Calu3 (cell line): ENCODE measurements at regions of chr4 and their contacts with region 1.

Region 1: GRCh38 chr4:140326395-140326993 is 47.0 kb upstream of the SCOC start:
- DNase-seq: peak; percentile 14
- H3K4me3 Mint-ChIP-seq: no peak overlapping the region
- H3K27ac Mint-ChIP-seq: no peak overlapping the region
- H3K4me1 Mint-ChIP-seq: peaks cover 5% of the 10 kb centered on the region
- H3K27me3 Mint-ChIP-seq: no peaks in the 10 kb centered on the region
- CTCF ChIP-seq: peak; percentile 32

Region 2: GRCh38 chr4:139734875-139735380 is 591.6 kb before region 1 on chr4:
- CTCF ChIA-PET with region 1: interaction called, 5 read pairs
- intact Hi-C with region 1: loop called (anchors 10 kb)
- DNase-seq: peak; percentile 61
- H3K4me3 Mint-ChIP-seq: peak overlapping the region; percentile 59
- H3K27ac Mint-ChIP-seq: no peak overlapping the region
- H3K4me1 Mint-ChIP-seq: no peaks in the 10 kb centered on the region
- H3K27me3 Mint-ChIP-seq: no peaks in the 10 kb centered on the region
- CTCF ChIP-seq: peak; percentile 62

Region 3: DNA sequence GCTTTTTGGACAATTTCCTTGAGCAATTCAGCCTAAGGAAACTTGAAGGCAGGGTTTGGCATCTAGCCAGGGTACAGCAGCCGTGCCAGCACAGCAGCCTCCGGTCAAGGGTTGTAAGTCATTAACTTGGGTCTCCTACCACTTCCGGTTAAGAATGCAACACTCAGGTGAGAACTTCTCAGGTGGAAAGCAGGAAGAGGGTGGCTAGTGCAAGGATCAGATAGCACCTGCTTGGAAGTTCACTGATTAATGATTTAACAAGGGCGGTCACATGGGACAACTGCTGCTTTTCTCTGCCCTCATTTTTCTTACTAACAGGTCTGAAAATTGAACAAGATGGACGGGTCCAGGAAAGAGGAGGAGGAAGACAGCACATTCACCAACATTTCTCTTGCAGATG is 16.8 kb after region 1 on chr4:
- CTCF ChIA-PET with region 1: interaction called, 15 read pairs
- intact Hi-C with region 1: no loop called
- DNase-seq: peak; percentile 86
- H3K4me3 Mint-ChIP-seq: peak overlapping the region; percentile 81
- H3K27ac Mint-ChIP-seq: peak overlapping the region; percentile 87
- H3K4me1 Mint-ChIP-seq: peaks cover 23% of the 10 kb centered on the region
- H3K27me3 Mint-ChIP-seq: no peaks in the 10 kb centered on the region
- CTCF ChIP-seq: no peak

Region 4: GRCh38 chr4:140359562-140360427 is 33.3 kb after region 1 on chr4:
- CTCF ChIA-PET with region 1: interaction called, 24 read pairs
- intact Hi-C with region 1: loop called (anchors 1 kb)
- DNase-seq: peak; percentile 81
- H3K4me3 Mint-ChIP-seq: no peak overlapping the region
- H3K27ac Mint-ChIP-seq: no peak overlapping the region
- H3K4me1 Mint-ChIP-seq: peaks cover 23% of the 10 kb centered on the region
- H3K27me3 Mint-ChIP-seq: no peaks in the 10 kb centered on the region
- CTCF ChIP-seq: peak; percentile 58

Region 5: GRCh38 chr4:140469791-140470733 is 143.6 kb after region 1 on chr4:
- CTCF ChIA-PET with region 1: no interaction called
- intact Hi-C with region 1: no loop called
- DNase-seq: no peak
- H3K4me3 Mint-ChIP-seq: no peak overlapping the region
- H3K27ac Mint-ChIP-seq: no peak overlapping the region
- H3K4me1 Mint-ChIP-seq: no peaks in the 10 kb centered on the region
- H3K27me3 Mint-ChIP-seq: peaks cover 22% of the 10 kb centered on the region
- CTCF ChIP-seq: no peak